CD14-positive monocyte (primary cell): ENCODE measurements at regions of chr11 and their contacts with region 1.

Region 1: DNA sequence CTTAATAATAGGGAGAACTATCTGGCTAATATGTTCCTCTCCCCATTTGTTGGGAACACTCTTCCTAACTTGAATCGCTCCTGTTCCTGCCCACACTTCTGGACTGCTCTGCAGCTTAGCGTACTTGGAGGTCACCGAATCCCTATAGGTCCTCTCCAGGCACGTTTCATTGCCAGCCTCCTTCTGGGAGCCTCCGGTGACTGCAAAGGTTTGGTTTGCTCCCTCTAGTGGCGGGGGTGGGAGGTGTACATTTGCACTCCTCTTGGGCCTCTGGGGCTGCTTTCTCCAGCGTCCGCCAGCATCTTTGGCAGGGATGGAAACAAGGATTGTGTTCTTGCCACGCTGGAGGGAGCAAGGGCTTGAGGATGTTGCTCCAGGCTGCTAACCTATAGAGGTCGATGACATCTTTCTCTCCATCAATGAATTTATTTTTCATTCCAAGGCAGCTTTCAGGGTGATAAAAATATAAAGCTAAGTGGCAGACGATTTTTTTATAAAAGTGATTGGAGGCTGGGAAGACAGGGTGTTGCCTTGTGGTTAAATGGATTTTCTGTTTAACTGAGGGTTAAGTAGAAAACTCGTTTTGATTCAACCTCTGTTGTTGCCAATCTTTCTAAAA is 48.7 kb downstream of the TSPAN18 start:
- DNase-seq: peak in 2 of 3 donors; percentile 6 to 28
- H3K4me3 ChIP-seq: no peak overlapping the region
- H3K4me3 Mint-ChIP-seq: no peak overlapping the region
- H3K27ac ChIP-seq: no peak overlapping the region
- H3K27ac Mint-ChIP-seq: peak overlapping the region in 1 of 7 donors; percentile 33
- H3K4me1 ChIP-seq: no peaks in the 10 kb centered on the region
- H3K4me1 Mint-ChIP-seq: no peaks in the 10 kb centered on the region
- H3K27me3 ChIP-seq: no peaks in the 10 kb centered on the region
- H3K27me3 Mint-ChIP-seq: peaks cover 11 to 14% (median 13%) of the 10 kb centered on the region in 3 donors
- CTCF ChIP-seq: peak; percentile 82

Region 2: DNA sequence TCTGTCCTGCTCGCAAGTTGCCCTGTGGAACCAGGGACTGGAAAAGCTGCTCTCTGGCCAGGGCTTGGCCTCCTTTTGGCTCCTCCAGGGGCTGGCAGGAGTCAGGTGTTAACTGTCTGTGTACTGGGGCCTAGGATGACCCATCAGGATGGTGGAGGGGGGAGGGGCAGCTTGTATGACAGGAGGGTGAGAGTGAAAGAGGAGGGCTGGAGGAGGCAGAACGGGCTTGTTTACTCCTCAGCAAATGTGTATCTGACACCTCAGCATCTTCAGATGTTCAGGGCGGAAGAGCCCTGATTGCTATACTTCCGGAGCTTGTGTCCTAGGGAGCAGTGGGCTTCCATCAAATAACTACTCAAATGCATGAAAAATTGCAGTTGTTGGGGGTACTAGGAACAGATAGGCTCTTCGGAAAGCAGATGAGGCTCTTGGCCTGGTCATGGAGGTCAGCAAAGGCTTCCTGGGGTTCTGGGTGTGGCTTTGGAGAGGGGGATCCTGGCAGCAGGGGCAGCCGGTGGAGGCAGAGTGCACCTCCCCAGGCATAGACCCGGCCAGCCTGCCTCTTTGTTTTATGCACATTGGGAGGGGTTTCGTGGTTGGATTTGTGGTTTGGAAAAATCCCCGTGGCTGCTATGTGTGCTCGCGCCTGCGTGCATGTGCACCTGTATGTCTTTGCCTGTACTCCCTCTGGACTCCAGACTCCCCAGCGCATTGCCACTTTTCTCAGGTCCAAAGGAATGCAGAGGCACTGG is 178.8 kb before region 1 on chr11:
- intact Hi-C with region 1: no loop called
- DNase-seq: peak in 1 of 3 donors; percentile 24
- H3K4me3 ChIP-seq: no peak overlapping the region
- H3K4me3 Mint-ChIP-seq: no peak overlapping the region
- H3K27ac ChIP-seq: no peak overlapping the region
- H3K27ac Mint-ChIP-seq: peak overlapping the region in 2 of 7 donors; percentile 33 to 46
- H3K4me1 ChIP-seq: peaks cover 14 to 15% of the 10 kb centered on the region in 2 donors
- H3K4me1 Mint-ChIP-seq: peaks cover 19% of the 10 kb centered on the region
- H3K27me3 ChIP-seq: no peaks in the 10 kb centered on the region
- H3K27me3 Mint-ChIP-seq: peaks cover 0 to under 1% (median 0%) of the 10 kb centered on the region in 3 donors
- CTCF ChIP-seq: no peak

Region 3: GRCh38 chr11:44621140-44621681 is 154.3 kb before region 1 on chr11:
- intact Hi-C with region 1: loop called (anchors 5 to 10 kb)
- DNase-seq: peak; percentile 36 to 57 (median 56)
- H3K4me3 ChIP-seq: no peak overlapping the region
- H3K4me3 Mint-ChIP-seq: no peak overlapping the region
- H3K27ac ChIP-seq: no peak overlapping the region
- H3K27ac Mint-ChIP-seq: no peak overlapping the region
- H3K4me1 ChIP-seq: peaks cover 21 to 28% of the 10 kb centered on the region in 2 donors
- H3K4me1 Mint-ChIP-seq: peaks cover 40% of the 10 kb centered on the region
- H3K27me3 ChIP-seq: no peaks in the 10 kb centered on the region
- H3K27me3 Mint-ChIP-seq: peaks cover 12 to 19% (median 16%) of the 10 kb centered on the region in 3 donors
- CTCF ChIP-seq: peak; percentile 94

Region 4: GRCh38 chr11:44911029-44911814 is 135.7 kb after region 1 on chr11:
- intact Hi-C with region 1: no loop called
- DNase-seq: peak; percentile 50 to 74 (median 70)
- H3K4me3 ChIP-seq: no peak overlapping the region
- H3K4me3 Mint-ChIP-seq: peak overlapping the region in 1 of 2 donors; percentile 39
- H3K27ac ChIP-seq: no peak overlapping the region
- H3K27ac Mint-ChIP-seq: no peak overlapping the region
- H3K4me1 ChIP-seq: peaks cover 12 to 13% of the 10 kb centered on the region in 2 donors
- H3K4me1 Mint-ChIP-seq: peaks cover 10% of the 10 kb centered on the region
- H3K27me3 ChIP-seq: peaks cover 0 to 2% of the 10 kb centered on the region in 2 donors
- H3K27me3 Mint-ChIP-seq: peaks cover 14 to 15% (median 14%) of the 10 kb centered on the region in 3 donors
- CTCF ChIP-seq: peak; percentile 85

Region 5: DNA sequence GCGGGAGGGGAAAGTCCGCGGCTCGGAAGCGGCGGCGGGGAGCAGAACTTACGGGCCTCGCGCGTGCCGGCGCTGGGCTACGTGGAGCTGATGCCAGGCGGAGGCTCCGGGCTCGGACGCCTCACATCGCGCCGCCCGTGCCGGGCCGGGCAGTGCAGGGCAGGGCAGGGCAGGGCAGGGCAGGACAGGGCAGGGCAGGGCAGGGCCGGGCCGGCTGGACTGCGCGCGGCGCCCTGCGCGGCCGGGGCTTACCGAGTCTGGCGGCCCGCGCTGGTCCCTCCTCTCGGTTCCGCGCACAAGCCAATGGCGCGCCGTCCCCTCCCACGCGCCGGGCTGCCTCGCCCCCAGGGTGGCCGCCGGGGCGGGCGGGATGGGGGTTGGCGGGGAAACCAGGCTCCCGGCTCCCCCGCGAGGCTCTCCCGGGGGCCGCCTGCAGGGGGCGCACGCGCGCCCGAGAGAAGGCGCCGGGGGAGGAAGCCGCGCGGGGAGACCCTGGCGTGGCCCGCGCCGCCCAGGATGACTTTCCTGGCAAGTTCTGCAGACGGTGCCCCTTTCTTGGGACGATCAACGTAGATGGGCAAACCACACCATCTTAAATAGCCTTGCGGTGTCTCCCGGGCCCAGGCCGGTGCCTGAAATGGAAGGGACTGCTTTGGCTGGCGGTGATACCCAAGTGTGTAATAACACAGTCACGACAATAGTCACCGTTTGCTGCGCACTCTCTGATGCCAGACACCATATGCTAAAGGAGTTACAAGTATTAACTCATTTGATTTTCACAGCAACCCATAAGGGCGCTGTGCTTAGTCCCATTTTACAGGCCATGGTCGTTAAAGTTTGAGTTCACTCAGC is 175.4 kb after region 1 on chr11 and contains the start of gene TP53I11:
- intact Hi-C with region 1: no loop called
- DNase-seq: peak; percentile 44 to 56 (median 48)
- H3K4me3 ChIP-seq: peak within 1 kb of the TSS; percentile 75 to 92 (median 84)
- H3K4me3 Mint-ChIP-seq: peak within 1 kb of the TSS; percentile 84 to 89
- H3K27ac ChIP-seq: peak within 1 kb of the TSS in 1 of 2 donors; percentile 79
- H3K27ac Mint-ChIP-seq: peak within 1 kb of the TSS in 6 of 7 donors; percentile 26 to 72 (median 68)
- H3K4me1 ChIP-seq: peaks cover 39 to 57% of the 10 kb centered on the region in 2 donors
- H3K4me1 Mint-ChIP-seq: peaks cover 52% of the 10 kb centered on the region
- H3K27me3 ChIP-seq: peaks cover 0 to 3% of the 10 kb centered on the region in 2 donors
- H3K27me3 Mint-ChIP-seq: peaks cover 3 to 15% (median 5%) of the 10 kb centered on the region in 3 donors
- CTCF ChIP-seq: peak; percentile 82
- polyA plus RNA-seq, gene TP53I11: 11.0 to 13.2 (median 11.3) TPM

Region 6: GRCh38 chr11:46281371-46281831 is 1505.9 kb after region 1 on chr11:
- intact Hi-C with region 1: no loop called
- DNase-seq: no peak
- H3K4me3 ChIP-seq: no peak overlapping the region
- H3K4me3 Mint-ChIP-seq: peak overlapping the region in 1 of 2 donors; percentile 63
- H3K27ac ChIP-seq: no peak overlapping the region
- H3K27ac Mint-ChIP-seq: peak overlapping the region in 1 of 7 donors; percentile 43
- H3K4me1 ChIP-seq: peaks cover 10 to 13% of the 10 kb centered on the region in 2 donors
- H3K4me1 Mint-ChIP-seq: peaks cover 14% of the 10 kb centered on the region
- H3K27me3 ChIP-seq: peaks cover 27 to 59% of the 10 kb centered on the region in 2 donors
- H3K27me3 Mint-ChIP-seq: peaks cover 43 to 69% (median 44%) of the 10 kb centered on the region in 3 donors
- CTCF ChIP-seq: no peak